Calu3 (cell line): ENCODE measurements at regions of chr22 and their contacts with region 1.

Region 1: GRCh38 chr22:33920927-33921524 is 750 bp upstream of the LARGE1 start:
- DNase-seq: peak; percentile 98
- H3K4me3 Mint-ChIP-seq: peak overlapping the region; percentile 74
- H3K27ac Mint-ChIP-seq: no peak overlapping the region
- H3K4me1 Mint-ChIP-seq: peaks cover 17% of the 10 kb centered on the region
- H3K27me3 Mint-ChIP-seq: peaks cover 66% of the 10 kb centered on the region
- CTCF ChIP-seq: no peak

Region 2: GRCh38 chr22:33853200-33854097 is 67.6 kb before region 1 on chr22:
- CTCF ChIA-PET with region 1: no interaction called
- intact Hi-C with region 1: loop called (anchors 5 kb)
- DNase-seq: peak; percentile 64
- H3K4me3 Mint-ChIP-seq: peak overlapping the region; percentile 77
- H3K27ac Mint-ChIP-seq: peak overlapping the region; percentile 87
- H3K4me1 Mint-ChIP-seq: peaks cover 8% of the 10 kb centered on the region
- H3K27me3 Mint-ChIP-seq: no peaks in the 10 kb centered on the region
- CTCF ChIP-seq: no peak

Region 3: GRCh38 chr22:34111210-34111824 is 190.3 kb after region 1 on chr22:
- CTCF ChIA-PET with region 1: interaction called, 5 read pairs
- intact Hi-C with region 1: loop called (anchors 1 kb)
- DNase-seq: peak; percentile 6
- H3K4me3 Mint-ChIP-seq: no peak overlapping the region
- H3K27ac Mint-ChIP-seq: no peak overlapping the region
- H3K4me1 Mint-ChIP-seq: no peaks in the 10 kb centered on the region
- H3K27me3 Mint-ChIP-seq: no peaks in the 10 kb centered on the region
- CTCF ChIP-seq: no peak

Region 4: DNA sequence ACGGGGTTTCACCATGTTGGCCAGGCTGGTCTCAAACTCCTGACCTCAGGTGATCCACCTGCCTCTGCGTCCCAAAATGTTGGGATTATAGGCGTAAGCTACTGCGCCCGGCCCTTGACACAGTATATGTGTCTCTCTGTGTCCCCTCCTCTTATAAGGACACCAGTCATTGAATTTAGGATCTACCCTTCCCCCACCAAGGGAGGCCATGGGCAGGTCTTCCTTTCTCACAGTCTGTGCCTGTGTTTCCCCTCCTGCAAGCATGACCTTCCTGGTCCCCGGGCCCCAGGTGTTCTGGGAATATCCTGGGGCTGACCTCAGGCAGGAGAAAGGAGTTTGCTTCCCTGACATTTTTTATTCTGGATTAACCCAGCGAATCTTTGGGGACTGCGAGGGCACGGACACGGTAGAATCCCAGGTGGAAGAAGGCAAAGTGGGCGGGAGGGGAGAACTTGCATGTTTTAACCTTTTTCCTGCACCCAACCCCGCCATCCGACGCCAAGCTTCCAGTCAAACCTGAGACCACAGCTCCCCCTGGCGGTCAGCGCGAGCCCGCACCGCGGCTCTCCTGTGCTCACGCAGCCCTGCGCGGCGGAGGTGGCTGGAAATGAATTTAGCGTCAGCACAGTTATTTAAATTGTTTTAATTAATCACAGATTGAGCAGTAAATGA is 1102.8 kb after region 1 on chr22:
- CTCF ChIA-PET with region 1: no interaction called
- intact Hi-C with region 1: loop called (anchors 5 kb)
- DNase-seq: peak; percentile 87
- H3K4me3 Mint-ChIP-seq: no peak overlapping the region
- H3K27ac Mint-ChIP-seq: no peak overlapping the region
- H3K4me1 Mint-ChIP-seq: peaks cover 8% of the 10 kb centered on the region
- H3K27me3 Mint-ChIP-seq: peaks cover 33% of the 10 kb centered on the region
- CTCF ChIP-seq: peak; percentile 91